Sciatic nerve (tissue), 2 donors: ENCODE measurements at regions of chr20 and their contacts with region 1.

Region 1: GRCh38 chr20:63049561-63050221 is 42.9 kb upstream of the BHLHE23 start:
- DNase-seq: no peak
- ATAC-seq: no peak

Region 2: DNA sequence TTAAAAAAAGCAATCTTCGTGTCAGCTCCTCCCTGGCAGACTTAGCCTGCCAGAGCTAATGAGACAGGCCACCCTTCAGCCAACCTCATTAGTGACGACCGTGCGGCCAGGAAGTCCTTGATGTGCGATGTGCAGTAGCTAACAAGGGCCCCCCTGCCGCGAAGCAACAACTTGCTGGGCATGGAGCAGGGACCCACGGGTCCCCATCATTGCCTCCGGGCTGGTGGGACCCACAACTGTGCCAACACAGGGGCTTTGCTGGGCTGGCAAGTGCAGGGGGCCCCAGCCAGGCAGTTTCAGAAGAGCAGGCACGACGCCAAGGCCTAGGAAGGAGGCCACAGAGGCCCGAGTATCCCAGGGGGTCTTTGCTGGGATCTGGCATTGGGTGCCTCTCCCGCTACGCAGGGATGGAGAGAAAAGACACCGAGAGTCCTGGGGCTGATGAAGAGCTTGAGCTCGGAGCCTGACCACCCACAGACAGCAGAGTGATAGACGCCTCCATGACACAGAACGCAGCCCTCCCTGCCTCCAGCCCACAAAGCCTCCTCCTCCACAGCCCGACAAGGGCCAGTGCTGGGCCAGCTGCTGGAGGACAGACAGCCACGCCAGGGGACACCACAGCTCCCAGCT is 69.5 kb after region 1 on chr20:
- intact Hi-C with region 1: loop called (anchors 1 kb)
- DNase-seq: no peak
- ATAC-seq: no peak